Posterior vena cava (tissue), 2 donors: ENCODE measurements at regions of chr19 and their contacts with region 1.

Region 1: GRCh38 chr19:47713046-47714021 is at the start of gene EHD2:
- DNase-seq: peak; percentile 93
- total RNA-seq, gene EHD2: 217 to 235 TPM

Region 2: GRCh38 chr19:47742634-47743033 is 29.3 kb after region 1 on chr19:
- intact Hi-C with region 1: loop called in 1 of 2 experiments (anchors 2 kb)
- DNase-seq: no peak